H1 (cell line): ENCODE measurements at regions of chr10 and their contacts with region 1.

Region 1: DNA sequence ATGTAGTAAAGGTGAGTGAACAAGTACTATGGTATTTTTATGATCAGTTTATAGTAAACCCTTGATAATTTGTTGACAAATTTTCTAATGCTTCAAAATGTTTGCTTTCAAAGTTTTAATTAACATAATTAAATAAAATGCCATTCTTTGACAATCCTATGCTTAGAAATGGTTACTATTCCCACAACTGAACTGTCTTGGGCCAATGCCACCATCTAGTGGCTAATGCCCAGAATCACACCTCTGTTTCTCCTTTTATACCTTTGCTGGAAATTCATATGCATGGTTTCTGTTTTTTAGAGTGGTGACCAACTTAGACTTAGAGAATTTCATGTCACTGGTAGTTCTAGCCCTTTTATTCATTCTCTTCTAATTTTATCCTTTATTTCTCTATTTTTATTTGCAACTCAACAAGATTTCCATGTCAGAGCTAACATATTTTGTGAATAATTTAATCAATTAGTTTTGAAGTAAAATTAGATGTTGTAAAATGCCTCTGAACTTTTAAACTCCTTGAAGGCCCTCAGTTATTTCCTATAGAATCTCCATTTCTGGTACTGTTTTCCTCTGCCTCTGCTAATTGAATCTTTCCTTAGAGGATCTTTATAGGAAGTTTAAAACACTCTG is 31.1 kb downstream of the PCGF5 start:
- DNase-seq: no peak
- H3K4me3 ChIP-seq: no peak overlapping the region
- H3K27ac ChIP-seq: no peak overlapping the region
- H3K4me1 ChIP-seq: peaks cover 0 to 4% (median 0%) of the 10 kb centered on the region in 4 experiments; a peak in 2 of 7 replicates
- H3K27me3 ChIP-seq: no peaks in the 10 kb centered on the region
- CTCF ChIP-seq: peak in 2 of 3 experiments; percentile 76 to 81; a peak in 3 of 4 replicates
- EP300 ChIP-seq: no peak
- POLR2A ChIP-seq: no peak
- RAD21 ChIP-seq: peak; percentile 95 to 96

Region 2: GRCh38 chr10:90912174-90912573 is 339.4 kb before region 1 on chr10:
- CTCF ChIA-PET with region 1: interaction called, 51 read pairs
- POLR2A ChIA-PET with region 1: no interaction called
- DNase-seq: no peak
- H3K4me3 ChIP-seq: no peak overlapping the region
- H3K27ac ChIP-seq: no peak overlapping the region
- H3K4me1 ChIP-seq: no peaks in the 10 kb centered on the region
- H3K27me3 ChIP-seq: peaks cover 32 to 49% (median 47%) of the 10 kb centered on the region in 4 experiments
- CTCF ChIP-seq: no peak
- EP300 ChIP-seq: no peak
- POLR2A ChIP-seq: no peak
- RAD21 ChIP-seq: no peak

Region 3: GRCh38 chr10:90999512-91000172 is 251.9 kb before region 1 on chr10:
- CTCF ChIA-PET with region 1: interaction called, 125 read pairs
- POLR2A ChIA-PET with region 1: no interaction called
- DNase-seq: no peak
- H3K4me3 ChIP-seq: no peak overlapping the region
- H3K27ac ChIP-seq: no peak overlapping the region
- H3K4me1 ChIP-seq: no peaks in the 10 kb centered on the region
- H3K27me3 ChIP-seq: peaks cover 0 to 2% (median under 1%) of the 10 kb centered on the region in 4 experiments; a peak in 2 of 7 replicates
- CTCF ChIP-seq: no peak
- EP300 ChIP-seq: no peak
- POLR2A ChIP-seq: no peak
- RAD21 ChIP-seq: no peak

Region 4: GRCh38 chr10:91043173-91043910 is 208.2 kb before region 1 on chr10:
- CTCF ChIA-PET with region 1: interaction called, 82 read pairs
- POLR2A ChIA-PET with region 1: no interaction called
- DNase-seq: no peak
- H3K4me3 ChIP-seq: no peak overlapping the region
- H3K27ac ChIP-seq: no peak overlapping the region
- H3K4me1 ChIP-seq: no peaks in the 10 kb centered on the region
- H3K27me3 ChIP-seq: no peaks in the 10 kb centered on the region; a peak in 1 of 7 replicates
- CTCF ChIP-seq: peak in 2 of 3 experiments; percentile 44 to 68; a peak in 2 of 4 replicates
- EP300 ChIP-seq: no peak
- POLR2A ChIP-seq: no peak
- RAD21 ChIP-seq: peak; percentile 76 to 80

Region 5: GRCh38 chr10:91088300-91089140 is 163.0 kb before region 1 on chr10:
- CTCF ChIA-PET with region 1: interaction called, 13 read pairs
- POLR2A ChIA-PET with region 1: no interaction called
- DNase-seq: no peak
- H3K4me3 ChIP-seq: no peak overlapping the region
- H3K27ac ChIP-seq: no peak overlapping the region
- H3K4me1 ChIP-seq: no peaks in the 10 kb centered on the region
- H3K27me3 ChIP-seq: no peaks in the 10 kb centered on the region
- CTCF ChIP-seq: no peak
- EP300 ChIP-seq: no peak
- POLR2A ChIP-seq: no peak
- RAD21 ChIP-seq: peak in 1 of 2 experiments; percentile 33; a peak in 3 of 4 replicates